ENCODE measurements at regions of chr12 and their contacts with region 1.

Region 1: GRCh38 chr12:54398995-54399793 is 14.7 kb upstream of the ZNF385A start:
- DNase-seq: peak; percentile 48
- ATAC-seq: peak; percentile 95
- H3K4me3 ChIP-seq: no peak overlapping the region
- H3K27ac ChIP-seq: no peak overlapping the region
- H3K4me1 ChIP-seq: no peaks in the 10 kb centered on the region
- H3K27me3 ChIP-seq: no peaks in the 10 kb centered on the region
- CTCF ChIP-seq: peak; percentile 91 to 99 (median 99)
- POLR2A ChIP-seq: no peak
- RAD21 ChIP-seq: peak; percentile 93

Region 2: DNA sequence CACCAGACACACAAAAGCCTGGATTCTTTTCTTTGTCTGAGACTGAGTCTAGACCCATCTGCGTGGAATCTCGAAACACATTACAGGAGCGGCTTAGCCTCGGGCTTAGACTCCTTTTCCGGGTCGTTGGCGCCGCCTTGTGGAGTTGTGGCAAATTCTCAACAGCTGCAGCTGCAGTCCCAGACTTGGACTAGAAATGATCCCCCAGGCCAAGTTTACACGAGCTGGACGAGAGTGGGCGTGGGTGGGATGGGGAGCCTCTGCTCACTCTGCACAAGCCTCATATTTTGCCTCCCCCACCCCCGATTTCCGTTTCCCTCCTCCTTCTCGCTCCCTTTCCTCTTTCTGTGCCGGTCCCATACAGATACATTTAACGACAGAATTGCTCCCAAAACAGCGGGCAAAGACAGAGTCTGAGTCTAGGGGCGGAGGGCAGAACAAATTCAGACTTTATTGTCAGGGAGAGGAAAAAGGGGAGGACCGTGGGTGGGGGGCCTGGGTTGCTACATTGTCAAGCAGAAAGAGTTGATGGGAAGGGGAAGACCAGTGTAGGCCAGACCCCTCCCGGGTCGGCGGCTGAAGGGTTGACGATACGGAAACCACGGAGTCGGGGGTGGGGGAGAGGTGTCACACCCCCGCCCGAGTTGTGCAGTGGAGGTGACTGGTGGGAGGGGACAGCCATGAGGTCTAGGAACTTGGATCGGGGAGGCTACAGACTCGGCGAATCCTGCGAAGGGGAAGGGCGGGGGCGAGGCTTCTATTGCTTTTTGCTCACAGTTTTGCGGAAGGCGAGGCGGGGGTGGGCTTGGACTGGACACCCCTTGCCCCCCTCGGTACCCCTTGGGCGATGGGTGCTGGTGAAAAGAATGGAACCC is 30.2 kb before region 1 on chr12:
- CTCF ChIA-PET with region 1: interaction called, 12 read pairs
- POLR2A ChIA-PET with region 1: no interaction called
- RAD21 ChIA-PET with region 1: no interaction called
- intact Hi-C with region 1: loop called (anchors 1 kb)
- DNase-seq: peak; percentile 67
- ATAC-seq: peak; percentile 72
- H3K4me3 ChIP-seq: no peak overlapping the region
- H3K27ac ChIP-seq: no peak overlapping the region
- H3K4me1 ChIP-seq: peaks cover 30 to 58% of the 10 kb centered on the region in 2 experiments
- H3K27me3 ChIP-seq: no peaks in the 10 kb centered on the region
- CTCF ChIP-seq: peak; percentile 87 to 96 (median 90)
- POLR2A ChIP-seq: no peak
- RAD21 ChIP-seq: peak; percentile 90

Region 3: DNA sequence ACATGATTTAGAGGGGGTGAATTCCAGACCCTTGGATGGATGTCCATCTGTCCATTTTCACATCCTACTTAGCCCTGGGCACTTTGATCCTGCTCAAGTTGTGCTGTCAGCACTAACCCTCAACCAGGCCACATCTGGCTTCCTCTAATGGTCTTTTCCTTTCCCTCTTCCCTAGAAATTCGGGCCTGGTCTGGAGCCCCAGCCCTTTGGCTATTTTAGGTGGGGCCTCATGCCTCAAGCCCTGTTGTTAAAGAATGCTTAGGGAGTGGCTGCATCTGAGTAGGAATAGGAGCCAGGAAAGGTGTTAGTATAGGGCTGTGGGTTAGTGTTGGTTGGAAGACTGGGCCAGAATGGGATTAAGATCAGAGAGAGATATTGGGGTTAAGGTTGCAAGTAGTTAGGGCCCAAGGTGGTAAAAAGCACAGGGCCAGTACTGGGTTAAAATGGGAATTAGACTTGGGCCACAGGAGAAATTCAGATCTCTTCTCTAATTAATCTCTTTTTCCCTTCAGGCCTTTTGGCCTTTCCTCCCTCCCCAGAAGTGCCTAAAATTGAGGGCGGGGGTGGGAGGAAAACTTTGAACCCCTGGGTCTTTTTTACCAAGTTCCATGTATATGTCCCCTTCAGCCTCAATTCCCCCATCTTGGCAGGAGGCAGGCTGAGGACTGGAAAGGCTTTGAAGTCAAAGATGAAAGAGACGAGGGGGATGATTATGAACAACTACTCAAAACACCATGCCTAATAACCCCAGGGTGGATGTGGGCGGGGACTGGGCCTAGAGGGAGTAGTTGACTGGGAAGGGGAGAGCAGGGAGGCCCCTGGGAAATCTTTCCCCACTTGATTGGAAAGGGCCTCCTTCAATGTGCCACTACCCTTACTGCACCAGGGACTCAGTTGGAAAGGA is 10.7 kb before region 1 on chr12:
- CTCF ChIA-PET with region 1: interaction called, 18 read pairs
- POLR2A ChIA-PET with region 1: no interaction called
- RAD21 ChIA-PET with region 1: no interaction called
- intact Hi-C with region 1: no loop called
- DNase-seq: no peak
- ATAC-seq: no peak
- H3K4me3 ChIP-seq: no peak overlapping the region
- H3K27ac ChIP-seq: peak overlapping the region; percentile 32
- H3K4me1 ChIP-seq: peaks cover 32 to 77% of the 10 kb centered on the region in 2 experiments
- H3K27me3 ChIP-seq: no peaks in the 10 kb centered on the region
- CTCF ChIP-seq: no peak
- POLR2A ChIP-seq: no peak
- RAD21 ChIP-seq: no peak

Region 4: GRCh38 chr12:54419088-54419892 is 20.1 kb after region 1 on chr12 and contains the start of gene ITGA5:
- CTCF ChIA-PET with region 1: interaction called, 41 read pairs
- POLR2A ChIA-PET with region 1: interaction called, 5 read pairs
- RAD21 ChIA-PET with region 1: interaction called in 1 of 2 experiments, 3 read pairs
- intact Hi-C with region 1: no loop called
- DNase-seq: peak; percentile 18
- ATAC-seq: peak; percentile 87
- H3K4me3 ChIP-seq: peak within 1 kb of the TSS; percentile 87 to 95
- H3K27ac ChIP-seq: peak within 1 kb of the TSS; percentile 77
- H3K4me1 ChIP-seq: peaks cover 19 to 70% of the 10 kb centered on the region in 2 experiments
- H3K27me3 ChIP-seq: no peaks in the 10 kb centered on the region
- CTCF ChIP-seq: no peak
- POLR2A ChIP-seq: peak; percentile 51
- RAD21 ChIP-seq: no peak
- total RNA-seq, gene ITGA5: 49.7 TPM

Region 5: DNA sequence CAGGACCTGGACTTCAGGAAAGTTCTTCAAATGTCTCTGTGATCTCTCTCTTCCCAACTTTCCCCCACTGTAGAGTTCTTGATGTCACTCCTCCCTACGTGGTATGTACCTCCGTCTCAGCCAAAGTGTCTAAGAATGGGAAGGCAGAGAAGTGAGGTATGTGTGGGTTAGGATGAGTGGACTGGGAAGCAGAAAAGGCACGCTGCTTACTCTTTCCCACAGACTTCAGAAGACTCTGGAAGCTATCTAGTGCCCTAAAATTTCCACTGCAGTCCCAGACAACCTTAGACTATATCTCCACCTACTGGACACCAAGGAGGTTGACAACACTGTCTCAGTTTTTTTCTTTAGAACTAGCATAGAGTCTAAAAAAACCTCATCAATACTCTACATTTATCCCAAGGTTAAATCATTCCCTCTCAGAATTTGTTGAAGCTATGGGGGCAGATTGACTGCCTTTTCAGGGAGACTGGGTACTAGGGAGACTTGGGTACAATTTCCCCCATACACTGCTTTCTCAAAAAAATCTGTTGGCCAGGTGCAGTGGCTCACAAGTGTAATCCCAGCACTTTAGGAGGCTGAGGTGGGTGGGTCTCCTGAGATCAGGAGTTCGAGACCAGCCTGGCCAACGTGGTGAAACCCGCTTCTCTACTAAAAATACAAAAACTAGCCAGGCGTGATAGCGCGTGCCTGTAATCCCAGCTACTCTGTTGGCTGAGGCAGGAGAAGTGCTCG is 40.5 kb after region 1 on chr12:
- CTCF ChIA-PET with region 1: interaction called, 182 read pairs
- POLR2A ChIA-PET with region 1: interaction called, 4 read pairs
- RAD21 ChIA-PET with region 1: interaction called, 10 to 13 read pairs
- intact Hi-C with region 1: loop called (anchors 1 kb)
- DNase-seq: peak; percentile 38
- ATAC-seq: peak; percentile 92
- H3K4me3 ChIP-seq: no peak overlapping the region
- H3K27ac ChIP-seq: no peak overlapping the region
- H3K4me1 ChIP-seq: no peaks in the 10 kb centered on the region
- H3K27me3 ChIP-seq: no peaks in the 10 kb centered on the region
- CTCF ChIP-seq: peak; percentile 67 to 92 (median 81)
- POLR2A ChIP-seq: no peak
- RAD21 ChIP-seq: peak; percentile 93